Activated CD4-positive, alpha-beta memory T cell treated with anti-CD3 and anti-CD28 coated beads, Interleukin-2, amount 10 ng/mL, durations not matched to agents 7 days and 5 days (primary cell): ENCODE measurements at regions of chr10 and their contacts with region 1.

Region 1: GRCh38 chr10:3828404-3829155 is 43.6 kb upstream of the KLF6 start:
- DNase-seq: no peak
- H3K4me3 Mint-ChIP-seq: peak overlapping the region; percentile 73
- H3K27ac Mint-ChIP-seq: peak overlapping the region; percentile 88
- H3K4me1 Mint-ChIP-seq: peaks cover 45% of the 10 kb centered on the region
- H3K27me3 Mint-ChIP-seq: no peaks in the 10 kb centered on the region

Region 2: GRCh38 chr10:3852147-3852904 is 23.7 kb after region 1 on chr10:
- CTCF ChIA-PET with region 1: interaction called, 3 read pairs
- POLR2A ChIA-PET with region 1: interaction called, 17 read pairs
- DNase-seq: peak; percentile 76
- H3K4me3 Mint-ChIP-seq: peak overlapping the region; percentile 15
- H3K27ac Mint-ChIP-seq: peak overlapping the region; percentile 75
- H3K4me1 Mint-ChIP-seq: peaks cover 36% of the 10 kb centered on the region
- H3K27me3 Mint-ChIP-seq: no peaks in the 10 kb centered on the region

Region 3: GRCh38 chr10:3935141-3935540 is 106.6 kb after region 1 on chr10:
- CTCF ChIA-PET with region 1: no interaction called
- POLR2A ChIA-PET with region 1: interaction called, 10 read pairs
- DNase-seq: peak; percentile 81
- H3K4me3 Mint-ChIP-seq: peak overlapping the region; percentile 58
- H3K27ac Mint-ChIP-seq: peak overlapping the region; percentile 86
- H3K4me1 Mint-ChIP-seq: peaks cover 50% of the 10 kb centered on the region
- H3K27me3 Mint-ChIP-seq: no peaks in the 10 kb centered on the region